Activated naive CD4-positive, alpha-beta T cell treated with anti-CD3 and anti-CD28 coated beads for 36 hours (primary cell): ENCODE measurements at regions of chr1 and their contacts with region 1.

Region 1: GRCh38 chr1:202957733-202958543 is at the start of gene ADIPOR1:
- DNase-seq: peak; percentile 94
- H3K4me3 Mint-ChIP-seq: peak within 1 kb of the TSS; percentile 85
- H3K27ac Mint-ChIP-seq: peak within 1 kb of the TSS; percentile 37
- H3K4me1 Mint-ChIP-seq: peaks cover 48% of the 10 kb centered on the region
- H3K27me3 Mint-ChIP-seq: no peaks in the 10 kb centered on the region
- total RNA-seq, gene ADIPOR1: 75.5 to 77.0 TPM

Region 2: GRCh38 chr1:202844931-202845330 is 113.0 kb before region 1 on chr1:
- CTCF ChIA-PET with region 1: no interaction called
- intact Hi-C with region 1: no loop called
- DNase-seq: no peak
- H3K4me3 Mint-ChIP-seq: no peak overlapping the region
- H3K27ac Mint-ChIP-seq: no peak overlapping the region
- H3K4me1 Mint-ChIP-seq: no peaks in the 10 kb centered on the region
- H3K27me3 Mint-ChIP-seq: peaks cover 2% of the 10 kb centered on the region

Region 3: GRCh38 chr1:202888531-202889360 is 69.2 kb before region 1 on chr1 and contains the start of gene RABIF:
- CTCF ChIA-PET with region 1: no interaction called
- intact Hi-C with region 1: loop called (anchors 1 kb)
- DNase-seq: peak; percentile 97
- H3K4me3 Mint-ChIP-seq: peak within 1 kb of the TSS; percentile 94
- H3K27ac Mint-ChIP-seq: peak within 1 kb of the TSS; percentile 96
- H3K4me1 Mint-ChIP-seq: peaks cover 24% of the 10 kb centered on the region
- H3K27me3 Mint-ChIP-seq: no peaks in the 10 kb centered on the region
- total RNA-seq, gene RABIF: 5.9 to 6.2 TPM

Region 4: DNA sequence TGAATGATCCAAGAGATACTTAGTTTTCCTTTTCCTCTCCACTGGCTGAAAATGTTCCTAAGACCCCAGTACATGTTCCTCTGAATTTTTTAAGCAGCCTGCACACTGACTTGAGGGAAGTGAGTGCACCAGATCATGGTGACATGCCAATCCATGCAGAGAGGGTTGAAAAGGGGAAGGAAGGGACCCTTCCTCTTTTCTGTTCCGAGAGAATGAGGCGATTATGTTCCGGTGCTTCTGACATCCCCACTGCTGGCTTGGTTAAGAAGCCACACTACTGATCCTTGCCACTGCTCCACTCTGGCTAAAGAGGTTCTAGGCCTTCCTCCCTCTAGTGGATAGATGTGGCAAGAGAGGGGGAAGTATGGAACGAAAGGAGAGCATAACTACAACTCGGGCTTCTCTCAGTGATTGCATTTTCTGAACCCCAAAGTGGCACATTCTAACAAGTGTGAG is 10.9 kb after region 1 on chr1:
- CTCF ChIA-PET with region 1: interaction called, 11 read pairs
- intact Hi-C with region 1: loop called (anchors 1 kb)
- DNase-seq: peak; percentile 56
- H3K4me3 Mint-ChIP-seq: no peak overlapping the region
- H3K27ac Mint-ChIP-seq: no peak overlapping the region
- H3K4me1 Mint-ChIP-seq: peaks cover 28% of the 10 kb centered on the region
- H3K27me3 Mint-ChIP-seq: no peaks in the 10 kb centered on the region

Region 5: GRCh38 chr1:203038891-203039608 is 81.1 kb after region 1 on chr1:
- CTCF ChIA-PET with region 1: no interaction called
- intact Hi-C with region 1: no loop called
- DNase-seq: peak; percentile 82
- H3K4me3 Mint-ChIP-seq: no peak overlapping the region
- H3K27ac Mint-ChIP-seq: no peak overlapping the region
- H3K4me1 Mint-ChIP-seq: no peaks in the 10 kb centered on the region
- H3K27me3 Mint-ChIP-seq: peaks cover 2% of the 10 kb centered on the region